Activated naive CD4-positive, alpha-beta T cell treated with anti-CD3 and anti-CD28 coated beads for 36 hours (primary cell): ENCODE measurements at regions of chr22 and their contacts with region 1.

Region 1: GRCh38 chr22:25048659-25049647 is 96.4 kb downstream of the KIAA1671 start:
- DNase-seq: peak; percentile 87
- H3K4me3 Mint-ChIP-seq: no peak overlapping the region
- H3K27ac Mint-ChIP-seq: no peak overlapping the region
- H3K4me1 Mint-ChIP-seq: no peaks in the 10 kb centered on the region
- H3K27me3 Mint-ChIP-seq: no peaks in the 10 kb centered on the region

Region 2: GRCh38 chr22:24768537-24769374 is 280.2 kb before region 1 on chr22:
- CTCF ChIA-PET with region 1: interaction called, 9 read pairs
- intact Hi-C with region 1: loop called (anchors 1 kb)
- DNase-seq: peak; percentile 68
- H3K4me3 Mint-ChIP-seq: no peak overlapping the region
- H3K27ac Mint-ChIP-seq: no peak overlapping the region
- H3K4me1 Mint-ChIP-seq: no peaks in the 10 kb centered on the region
- H3K27me3 Mint-ChIP-seq: peaks cover under 1% of the 10 kb centered on the region

Region 3: DNA sequence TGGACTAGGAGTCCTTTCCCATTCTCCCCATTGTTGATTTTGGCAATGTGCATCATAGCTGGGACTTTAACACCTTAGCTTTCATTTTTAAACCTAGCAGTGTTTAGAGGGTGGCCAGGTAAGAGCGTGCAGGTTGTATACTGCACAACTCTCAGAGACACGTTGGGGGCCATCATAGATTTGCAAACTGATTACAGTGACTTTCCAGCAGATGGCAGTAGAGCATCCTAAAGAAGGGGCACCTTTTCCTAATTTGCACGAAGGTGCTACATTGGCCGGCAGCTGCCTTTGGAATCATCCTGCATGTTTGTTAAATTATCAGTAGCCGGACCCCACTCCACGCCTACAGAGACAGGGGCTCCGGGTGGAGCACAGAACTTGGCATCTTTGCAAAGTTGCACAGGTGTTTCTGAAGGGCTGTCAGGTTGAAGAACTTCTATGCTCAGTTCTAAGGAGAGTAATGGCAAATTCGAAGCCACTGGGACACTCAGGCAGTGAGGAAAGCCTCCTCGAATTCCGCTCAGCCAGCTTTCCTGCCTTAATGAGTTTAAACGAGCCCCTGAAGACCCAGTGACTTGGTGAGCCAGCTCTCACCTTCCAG is 110.1 kb before region 1 on chr22:
- CTCF ChIA-PET with region 1: interaction called, 52 read pairs
- intact Hi-C with region 1: loop called (anchors 1 kb)
- DNase-seq: peak; percentile 33
- H3K4me3 Mint-ChIP-seq: no peak overlapping the region
- H3K27ac Mint-ChIP-seq: no peak overlapping the region
- H3K4me1 Mint-ChIP-seq: no peaks in the 10 kb centered on the region
- H3K27me3 Mint-ChIP-seq: peaks cover 2% of the 10 kb centered on the region

Region 4: GRCh38 chr22:24951942-24952836 is 96.8 kb before region 1 on chr22 and contains the start of gene KIAA1671:
- CTCF ChIA-PET with region 1: interaction called, 44 read pairs
- intact Hi-C with region 1: loop called (anchors 1 kb)
- DNase-seq: peak; percentile 87
- H3K4me3 Mint-ChIP-seq: peak within 1 kb of the TSS; percentile 76
- H3K27ac Mint-ChIP-seq: no peak within 1 kb of the TSS
- H3K4me1 Mint-ChIP-seq: peaks cover 5% of the 10 kb centered on the region
- H3K27me3 Mint-ChIP-seq: peaks cover 49% of the 10 kb centered on the region
- total RNA-seq, gene KIAA1671: 7.3 to 7.4 TPM

Region 5: DNA sequence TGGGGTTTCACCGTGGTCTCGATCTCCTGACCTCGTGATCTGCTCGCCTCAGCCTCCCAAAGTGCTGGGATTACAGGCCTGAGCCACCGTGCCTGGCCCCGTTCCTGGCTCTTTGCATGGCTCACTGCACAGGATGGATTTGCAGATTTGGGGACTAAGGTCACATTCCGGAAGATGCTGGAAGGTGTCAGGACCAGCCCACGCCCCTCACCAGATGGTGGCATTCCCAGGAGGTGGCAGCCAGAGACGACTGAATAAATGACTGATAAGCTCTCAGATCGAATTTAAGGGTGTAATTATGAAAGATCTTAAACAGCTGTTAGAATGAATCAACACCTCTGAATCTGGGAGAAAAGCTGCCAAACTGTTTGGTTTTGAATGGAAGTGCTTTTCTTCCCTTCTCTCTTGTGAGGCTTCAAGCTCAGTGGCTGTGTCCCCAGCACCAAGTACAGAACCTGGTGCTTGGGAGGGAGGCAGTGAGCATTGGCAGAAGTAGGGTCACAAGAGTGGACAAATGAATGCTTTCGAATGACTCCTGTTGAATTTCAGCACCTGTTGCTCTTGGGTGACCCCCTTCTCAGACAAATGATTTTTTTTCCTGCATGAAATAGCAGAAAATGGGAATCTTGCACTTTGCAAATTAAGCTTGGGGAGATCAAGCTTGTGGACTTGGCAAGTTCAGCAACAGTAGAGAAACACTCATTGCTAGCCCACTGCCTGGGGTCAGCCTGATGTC is 26.8 kb before region 1 on chr22:
- CTCF ChIA-PET with region 1: interaction called, 11 read pairs
- intact Hi-C with region 1: no loop called
- DNase-seq: no peak
- H3K4me3 Mint-ChIP-seq: no peak overlapping the region
- H3K27ac Mint-ChIP-seq: no peak overlapping the region
- H3K4me1 Mint-ChIP-seq: peaks cover 7% of the 10 kb centered on the region
- H3K27me3 Mint-ChIP-seq: peaks cover 7% of the 10 kb centered on the region

Region 6: GRCh38 chr22:25582946-25583345 is 534.0 kb after region 1 on chr22:
- CTCF ChIA-PET with region 1: no interaction called
- intact Hi-C with region 1: no loop called
- DNase-seq: no peak
- H3K4me3 Mint-ChIP-seq: no peak overlapping the region
- H3K27ac Mint-ChIP-seq: no peak overlapping the region
- H3K4me1 Mint-ChIP-seq: peaks cover 12% of the 10 kb centered on the region
- H3K27me3 Mint-ChIP-seq: no peaks in the 10 kb centered on the region